ENCODE measurements at regions of chr11 and their contacts with region 1.

Region 1: DNA sequence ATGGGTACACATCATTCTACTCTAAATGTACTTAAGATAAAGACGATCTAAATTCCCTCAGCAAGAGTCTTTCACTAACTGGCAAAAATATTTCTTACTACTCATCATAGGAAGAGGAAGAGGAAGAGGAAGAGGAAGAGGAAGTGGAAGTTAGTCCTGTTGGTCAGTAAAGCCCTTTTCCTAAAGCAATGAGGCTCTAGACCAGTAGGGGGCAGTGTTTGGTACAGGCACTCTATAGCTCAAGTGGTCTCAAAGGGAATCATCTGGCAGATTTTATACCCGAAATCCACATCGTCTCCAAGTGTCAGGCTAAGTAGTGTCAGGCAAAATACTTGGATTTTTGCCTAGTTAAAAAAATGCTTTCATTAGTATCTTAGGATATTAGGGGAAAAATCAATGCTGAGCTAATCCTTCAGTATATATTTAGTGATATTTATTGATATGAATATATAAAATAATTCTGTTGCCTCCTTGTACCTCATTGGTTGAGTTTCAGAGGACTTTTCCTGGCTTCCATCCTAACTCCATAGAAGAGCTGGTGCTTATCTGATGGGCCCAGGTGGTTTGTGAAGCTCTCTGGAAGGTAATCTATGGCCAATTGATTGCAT is 7.7 kb downstream of the BLID start:
- DNase-seq: peak in 1 of 2 donors; percentile 20
- H3K4me3 ChIP-seq: no peak overlapping the region
- H3K27ac ChIP-seq: peak overlapping the region in 1 of 2 donors; percentile 7
- H3K4me1 ChIP-seq: peaks cover 0 to 59% (median 10%) of the 10 kb centered on the region in 4 donors
- H3K27me3 ChIP-seq: no peaks in the 10 kb centered on the region
- CTCF ChIP-seq: peak in 1 of 2 experiments; percentile 12

Region 2: GRCh38 chr11:121741761-121742361 is 366.4 kb before region 1 on chr11:
- intact Hi-C with region 1: loop called (anchors 10 kb)
- DNase-seq: peak; percentile 81 to 94
- H3K4me3 ChIP-seq: peak overlapping the region; percentile 1 to 21
- H3K27ac ChIP-seq: peak overlapping the region; percentile 83 to 89
- H3K4me1 ChIP-seq: peaks cover 0 to 35% (median 9%) of the 10 kb centered on the region in 4 donors
- H3K27me3 ChIP-seq: no peaks in the 10 kb centered on the region
- CTCF ChIP-seq: peak in 1 of 2 experiments; percentile 4

Region 3: DNA sequence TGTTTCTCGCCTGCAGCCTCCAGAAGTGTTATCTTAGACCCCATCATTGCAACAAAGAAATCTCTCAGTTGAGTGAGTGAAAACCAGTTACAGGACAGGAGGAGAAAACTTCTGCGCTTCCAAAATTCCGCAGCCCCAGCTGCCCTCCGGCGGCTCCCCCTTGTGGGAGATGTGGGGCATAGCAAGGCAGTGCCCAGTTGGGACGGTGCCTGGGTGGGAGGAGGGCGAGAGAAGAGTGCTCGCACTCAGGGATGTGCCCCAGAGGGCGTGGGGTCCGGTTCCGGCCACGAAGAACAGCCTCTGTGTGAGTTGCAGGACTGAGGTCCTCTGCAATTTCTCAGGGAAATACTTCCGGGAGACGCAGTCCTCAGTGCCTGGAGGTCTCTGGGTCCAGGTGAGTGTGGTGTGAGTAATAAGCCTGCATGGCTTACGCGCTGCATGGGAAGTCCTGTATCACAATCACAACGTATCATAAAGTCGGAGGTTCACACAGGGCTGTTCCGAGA is 94.7 kb after region 1 on chr11:
- intact Hi-C with region 1: loop called (anchors 2 kb)
- DNase-seq: peak; percentile 63 to 87
- H3K4me3 ChIP-seq: peak overlapping the region; percentile 46 to 55
- H3K27ac ChIP-seq: peak overlapping the region; percentile 76 to 77
- H3K4me1 ChIP-seq: peaks cover 0 to 78% (median 36%) of the 10 kb centered on the region in 4 donors
- H3K27me3 ChIP-seq: no peaks in the 10 kb centered on the region
- CTCF ChIP-seq: peak; percentile 95 to 99

Region 4: GRCh38 chr11:122505304-122506006 is 397.2 kb after region 1 on chr11:
- intact Hi-C with region 1: loop called (anchors 10 kb)
- DNase-seq: peak; percentile 90 to 92
- H3K4me3 ChIP-seq: no peak overlapping the region
- H3K27ac ChIP-seq: peak overlapping the region; percentile 13 to 55
- H3K4me1 ChIP-seq: peaks cover 0 to 7% (median 3%) of the 10 kb centered on the region in 4 donors
- H3K27me3 ChIP-seq: no peaks in the 10 kb centered on the region
- CTCF ChIP-seq: peak; percentile 75 to 92

Measured in tibial artery (tissue), 4 donors.